PC-9 (cell line): ENCODE measurements at regions of chr13 and their contacts with region 1.

Region 1: DNA sequence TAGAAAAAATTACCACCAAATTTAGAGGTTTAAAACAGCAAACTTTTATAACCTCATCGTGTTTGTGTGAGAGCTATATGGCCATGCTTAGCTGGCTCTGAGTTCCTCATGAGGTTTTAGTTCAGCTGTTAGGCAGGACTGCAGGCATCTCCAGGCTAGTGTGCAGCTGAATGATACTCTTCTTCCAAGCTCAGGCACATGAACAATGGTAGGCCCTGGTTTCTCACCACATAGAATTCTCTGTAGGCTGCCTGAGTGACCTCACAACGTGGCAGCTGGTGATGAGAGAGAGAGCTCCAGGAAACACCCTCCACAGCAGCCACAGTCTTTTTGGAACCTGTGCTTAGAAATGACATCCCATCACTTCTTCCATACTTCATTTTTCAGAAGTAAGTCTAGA is 540.6 kb upstream of the MIR17HG start:
- DNase-seq: no peak
- H3K4me3 ChIP-seq: no peak overlapping the region
- H3K27ac ChIP-seq: no peak overlapping the region
- H3K4me1 ChIP-seq: no peaks in the 10 kb centered on the region
- H3K27me3 ChIP-seq: no peaks in the 10 kb centered on the region
- CTCF ChIP-seq: no peak

Region 2: DNA sequence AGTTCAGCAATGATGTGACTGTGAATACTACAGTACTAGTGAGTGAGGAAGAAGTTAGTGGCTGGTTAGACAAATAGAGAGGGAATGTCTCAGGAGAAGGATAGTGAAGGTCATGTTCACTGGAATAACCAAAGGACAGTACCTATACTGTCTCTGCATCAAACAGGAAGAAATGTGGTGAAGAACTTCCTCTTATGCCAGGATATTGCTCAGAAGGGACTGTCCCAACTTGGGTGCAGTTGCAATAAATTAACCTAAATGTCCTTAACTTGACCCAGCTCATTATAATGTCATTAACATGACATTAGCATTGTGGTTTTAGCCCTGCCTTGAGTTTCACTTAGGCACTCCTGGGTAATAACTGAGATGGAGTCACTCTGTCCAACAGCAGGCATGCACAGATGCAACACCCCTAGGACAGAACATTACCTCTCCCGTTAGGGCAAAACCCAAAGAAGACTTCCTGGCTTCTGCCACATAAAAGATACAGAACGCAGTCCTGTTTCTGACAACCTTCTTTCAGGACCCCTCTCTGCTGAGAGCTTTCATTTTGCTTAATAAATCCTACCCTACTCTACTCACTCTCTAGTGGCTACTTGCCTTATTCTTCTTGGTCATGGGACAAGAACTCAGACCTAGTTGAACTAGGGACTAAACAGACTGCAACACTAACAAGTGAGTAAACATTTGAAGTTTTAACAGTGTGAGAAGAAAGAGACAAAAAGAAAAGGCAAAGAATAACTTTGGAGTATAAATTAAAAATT is 1051.0 kb before region 1 on chr13:
- CTCF ChIA-PET with region 1: no interaction called
- POLR2A ChIA-PET with region 1: interaction called, 10 read pairs
- intact Hi-C with region 1: no loop called
- DNase-seq: no peak
- H3K4me3 ChIP-seq: no peak overlapping the region
- H3K27ac ChIP-seq: no peak overlapping the region
- H3K4me1 ChIP-seq: no peaks in the 10 kb centered on the region
- H3K27me3 ChIP-seq: no peaks in the 10 kb centered on the region
- CTCF ChIP-seq: no peak

Region 3: DNA sequence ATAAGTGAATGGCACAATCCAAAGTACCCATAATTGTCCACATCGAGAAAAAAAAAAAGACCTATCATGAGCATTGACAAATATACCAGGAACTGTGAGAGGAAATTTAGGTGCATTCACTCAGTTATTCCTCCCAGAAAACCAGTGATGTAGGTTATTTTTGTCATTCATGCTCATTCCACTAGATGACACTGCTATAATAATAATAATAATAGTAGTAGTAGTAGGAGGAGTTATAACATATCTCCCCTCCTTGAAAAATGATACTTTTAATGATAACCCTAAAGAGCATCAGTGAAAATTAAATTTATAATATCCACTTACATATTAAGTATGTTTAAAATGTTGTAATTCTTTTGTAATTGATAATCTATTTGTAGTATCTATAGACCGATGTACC is 76.7 kb after region 1 on chr13:
- CTCF ChIA-PET with region 1: no interaction called
- POLR2A ChIA-PET with region 1: no interaction called
- intact Hi-C with region 1: no loop called
- DNase-seq: no peak
- H3K4me3 ChIP-seq: no peak overlapping the region
- H3K27ac ChIP-seq: no peak overlapping the region
- H3K4me1 ChIP-seq: no peaks in the 10 kb centered on the region
- H3K27me3 ChIP-seq: no peaks in the 10 kb centered on the region
- CTCF ChIP-seq: no peak